ENCODE measurements at regions of chr19 and their contacts with region 1.

Region 1: DNA sequence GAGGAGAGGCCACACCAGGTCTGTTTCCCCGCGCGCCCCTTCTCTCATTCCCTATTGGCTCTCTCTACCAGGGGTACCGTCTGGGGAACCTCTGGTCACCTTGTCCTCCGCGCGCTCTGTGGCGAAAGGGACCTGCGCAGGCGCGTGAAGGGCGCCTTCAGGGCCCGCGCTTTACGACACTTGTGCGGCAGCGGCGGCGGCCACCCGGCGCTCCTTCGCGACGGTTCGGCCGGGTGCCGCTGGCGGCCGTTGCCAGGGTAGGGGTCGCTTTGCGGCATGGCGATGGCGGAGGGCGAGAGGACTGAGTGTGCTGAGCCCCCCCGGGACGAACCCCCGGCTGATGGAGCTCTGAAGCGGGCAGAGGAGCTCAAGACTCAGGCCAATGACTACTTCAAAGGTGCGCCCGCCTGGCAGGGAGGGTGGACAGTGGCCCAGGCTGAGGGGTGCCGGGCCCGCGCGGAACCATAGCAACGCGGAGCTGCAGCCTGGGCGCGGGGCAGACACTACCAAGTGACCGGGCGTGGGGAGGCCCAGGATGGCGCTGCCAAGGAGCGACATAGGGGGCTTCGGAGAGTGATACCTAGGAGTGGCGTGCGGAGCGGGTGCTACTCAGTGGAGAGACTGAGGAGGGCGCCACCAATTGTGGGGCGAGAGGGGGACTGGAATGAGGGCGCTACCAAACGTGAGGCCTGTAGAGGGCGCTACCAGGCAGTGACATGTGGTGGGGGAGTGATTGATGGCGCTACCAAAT is at the start of gene PPP5C:
- DNase-seq: peak; percentile 92
- H3K4me3 ChIP-seq: peak within 1 kb of the TSS; percentile 53 to 89 (median 65)
- H3K27ac ChIP-seq: peak within 1 kb of the TSS; percentile 52
- H3K4me1 ChIP-seq: peaks cover 35% of the 10 kb centered on the region
- H3K27me3 ChIP-seq: no peaks in the 10 kb centered on the region
- CTCF ChIP-seq: peak; percentile 97 to 98
- POLR2A ChIP-seq: peak; percentile 68
- total RNA-seq, gene PPP5C: 102 and 114 TPM in 2 replicates

Region 2: GRCh38 chr19:46299004-46299509 is 47.9 kb before region 1 on chr19:
- CTCF ChIA-PET with region 1: interaction called, 20 read pairs
- POLR2A ChIA-PET with region 1: no interaction called
- dilution Hi-C with region 1: no loop called
- intact Hi-C with region 1: loop called (anchors 1 kb)
- DNase-seq: peak; percentile 95
- H3K4me3 ChIP-seq: no peak overlapping the region
- H3K27ac ChIP-seq: peak overlapping the region; percentile 25
- H3K4me1 ChIP-seq: peaks cover 38% of the 10 kb centered on the region
- H3K27me3 ChIP-seq: peaks cover 0 to 13% of the 10 kb centered on the region in 2 experiments
- CTCF ChIP-seq: no peak
- POLR2A ChIP-seq: no peak

Region 3: GRCh38 chr19:46311444-46311843 is 35.6 kb before region 1 on chr19:
- CTCF ChIA-PET with region 1: no interaction called
- POLR2A ChIA-PET with region 1: no interaction called
- dilution Hi-C with region 1: no loop called
- intact Hi-C with region 1: no loop called
- DNase-seq: no peak
- H3K4me3 ChIP-seq: no peak overlapping the region
- H3K27ac ChIP-seq: no peak overlapping the region
- H3K4me1 ChIP-seq: no peaks in the 10 kb centered on the region
- H3K27me3 ChIP-seq: no peaks in the 10 kb centered on the region
- CTCF ChIP-seq: no peak
- POLR2A ChIP-seq: no peak

Region 4: GRCh38 chr19:46373421-46374359 is 26.7 kb after region 1 on chr19:
- CTCF ChIA-PET with region 1: interaction called, 7 read pairs
- POLR2A ChIA-PET with region 1: no interaction called
- dilution Hi-C with region 1: no loop called
- intact Hi-C with region 1: loop called (anchors 1 kb)
- DNase-seq: peak; percentile 81
- H3K4me3 ChIP-seq: no peak overlapping the region
- H3K27ac ChIP-seq: peak overlapping the region; percentile 82
- H3K4me1 ChIP-seq: peaks cover 34% of the 10 kb centered on the region
- H3K27me3 ChIP-seq: no peaks in the 10 kb centered on the region
- CTCF ChIP-seq: no peak
- POLR2A ChIP-seq: no peak

Region 5: GRCh38 chr19:46392243-46392801 is 45.3 kb after region 1 on chr19:
- CTCF ChIA-PET with region 1: no interaction called
- POLR2A ChIA-PET with region 1: no interaction called
- dilution Hi-C with region 1: no loop called
- intact Hi-C with region 1: loop called (anchors 1 kb)
- DNase-seq: no peak
- H3K4me3 ChIP-seq: no peak overlapping the region
- H3K27ac ChIP-seq: no peak overlapping the region
- H3K4me1 ChIP-seq: no peaks in the 10 kb centered on the region
- H3K27me3 ChIP-seq: no peaks in the 10 kb centered on the region
- CTCF ChIP-seq: no peak
- POLR2A ChIP-seq: no peak

Region 6: GRCh38 chr19:46442808-46443450 is 95.9 kb after region 1 on chr19:
- CTCF ChIA-PET with region 1: no interaction called
- POLR2A ChIA-PET with region 1: no interaction called
- dilution Hi-C with region 1: no loop called
- intact Hi-C with region 1: no loop called
- DNase-seq: peak; percentile 59
- H3K4me3 ChIP-seq: no peak overlapping the region
- H3K27ac ChIP-seq: no peak overlapping the region
- H3K4me1 ChIP-seq: peaks cover 2% of the 10 kb centered on the region
- H3K27me3 ChIP-seq: peaks cover 0 to 5% of the 10 kb centered on the region in 2 experiments
- CTCF ChIP-seq: no peak
- POLR2A ChIP-seq: no peak